Posterior vena cava (tissue), 2 donors: ENCODE measurements at regions of chr11 and their contacts with region 1.

Region 1: GRCh38 chr11:35337136-35337918 is 82.0 kb downstream of the SLC1A2 start:
- DNase-seq: no peak

Region 2: GRCh38 chr11:35182317-35182939 is 154.9 kb before region 1 on chr11:
- intact Hi-C with region 1: no loop called
- DNase-seq: no peak

Region 3: DNA sequence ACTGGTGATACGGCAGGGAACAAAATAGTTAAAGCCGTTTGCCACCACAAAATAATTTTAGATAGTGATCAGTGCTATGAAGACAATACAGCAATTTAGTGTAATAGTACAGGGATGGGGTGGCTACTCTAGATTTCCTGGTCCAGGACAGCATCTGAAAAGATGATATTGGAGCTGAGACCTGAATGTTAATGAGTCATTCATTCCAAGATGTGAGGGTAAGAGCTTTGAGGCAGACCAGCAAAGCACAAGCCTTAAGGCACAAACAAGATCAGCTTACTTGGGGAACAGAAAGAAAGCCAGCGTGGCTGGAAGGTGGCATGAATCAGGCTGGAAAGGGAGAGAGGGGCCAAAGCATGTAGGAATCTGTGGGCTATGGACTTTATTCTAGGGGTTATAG is 457.5 kb after region 1 on chr11:
- intact Hi-C with region 1: loop called in 1 of 2 experiments (anchors 5 kb)
- DNase-seq: no peak